ENCODE measurements at regions of chr9 and their contacts with region 1.

Region 1: GRCh38 chr9:84677092-84677491 is 7.6 kb downstream of the NTRK2 start:
- DNase-seq: no peak
- ATAC-seq: no peak

Region 2: GRCh38 chr9:83247732-83248131 is 1429.4 kb before region 1 on chr9:
- intact Hi-C with region 1: no loop called
- DNase-seq: no peak
- ATAC-seq: no peak

Region 3: DNA sequence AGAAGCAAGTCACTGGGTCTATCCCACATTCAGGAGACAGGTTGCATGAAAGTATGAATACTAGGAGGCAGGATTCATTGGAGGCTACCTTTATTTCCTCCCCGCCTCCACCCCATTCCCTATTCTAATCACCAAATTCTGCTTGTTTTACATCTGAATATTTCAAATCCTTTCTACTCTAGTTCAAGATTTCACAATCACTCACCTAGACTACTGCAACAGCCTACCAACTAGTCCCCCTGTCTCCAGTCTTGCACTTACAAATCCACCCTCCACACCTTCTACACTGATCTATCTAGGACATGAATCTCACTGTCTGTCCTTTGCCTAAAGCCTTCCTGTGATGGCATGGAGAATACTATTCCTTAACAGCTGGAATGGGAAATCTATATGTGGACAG is 749.5 kb before region 1 on chr9:
- intact Hi-C with region 1: loop called (anchors 5 kb)
- DNase-seq: no peak
- ATAC-seq: no peak

Region 4: DNA sequence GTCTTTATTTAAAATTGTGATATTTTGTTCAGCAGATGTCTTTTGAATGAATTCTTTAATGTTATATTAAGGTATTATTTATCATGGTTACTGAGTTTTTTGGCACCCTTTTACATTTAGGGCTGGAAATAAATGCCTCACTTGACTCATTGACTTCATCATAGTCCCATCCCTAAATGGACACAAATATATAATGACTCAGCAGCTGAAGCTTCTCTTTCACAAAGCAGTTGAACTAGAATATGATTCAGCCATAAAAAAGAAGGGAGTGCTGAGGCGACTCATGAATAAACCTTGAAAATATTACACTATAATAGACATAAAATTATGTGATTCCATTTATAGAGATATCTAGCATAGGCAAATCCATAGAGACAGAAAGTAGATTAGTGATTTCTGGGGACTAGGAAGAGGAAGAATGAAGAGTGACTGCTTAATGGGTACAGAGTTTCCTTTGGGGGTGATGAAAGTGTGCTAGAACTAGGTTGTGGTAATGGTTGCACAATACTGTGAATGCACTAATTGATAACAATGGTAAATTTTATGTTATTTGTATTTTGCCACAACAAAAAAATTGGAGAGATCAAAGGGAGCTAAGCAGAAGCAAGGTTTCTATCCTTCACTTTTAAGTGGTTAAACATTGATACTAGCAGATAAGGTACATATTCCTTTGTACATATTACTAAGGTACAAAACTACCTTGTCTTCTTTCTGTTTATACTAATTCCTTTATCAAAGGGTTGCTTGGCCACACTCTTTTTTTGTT is 442.1 kb after region 1 on chr9:
- intact Hi-C with region 1: no loop called
- DNase-seq: no peak
- ATAC-seq: no peak

Measured in sciatic nerve (tissue), 2 donors.